Activated CD8-positive, alpha-beta T cell treated with anti-CD3 and anti-CD28 coated beads, Interleukin-2, amount 10 ng/mL, durations not matched to agents 7 days and 5 days (primary cell): ENCODE measurements at regions of chr21 and their contacts with region 1.

Region 1: DNA sequence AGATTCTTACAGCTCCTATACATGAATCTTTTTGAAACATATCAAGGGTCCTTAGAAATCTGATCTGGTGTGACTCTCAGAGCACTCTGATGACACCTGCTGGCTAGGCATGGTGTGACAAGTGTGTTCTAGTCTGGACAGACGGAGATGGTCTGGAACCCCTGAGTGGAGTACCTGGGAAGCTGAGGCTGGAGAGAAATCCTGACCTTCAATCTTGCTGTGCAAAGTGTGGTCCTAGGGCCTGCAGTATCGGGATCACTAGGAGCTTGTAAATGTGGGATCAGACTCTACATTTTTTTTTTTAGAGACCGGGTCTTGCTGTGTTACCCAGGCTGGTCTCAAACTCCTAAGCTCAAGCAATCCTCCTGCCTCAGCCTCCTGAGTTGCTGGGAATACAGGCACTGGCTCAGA is 78.6 kb upstream of the SOD1 start:
- DNase-seq: peak; percentile 83
- ATAC-seq: peak; percentile 82
- H3K4me3 Mint-ChIP-seq: no peak overlapping the region
- H3K27ac Mint-ChIP-seq: no peak overlapping the region
- H3K4me1 Mint-ChIP-seq: no peaks in the 10 kb centered on the region
- H3K27me3 Mint-ChIP-seq: peaks cover 3% of the 10 kb centered on the region

Region 2: GRCh38 chr21:31098576-31099005 is 482.3 kb before region 1 on chr21:
- CTCF ChIA-PET with region 1: interaction called, 38 read pairs
- POLR2A ChIA-PET with region 1: no interaction called
- DNase-seq: peak; percentile 78
- ATAC-seq: peak; percentile 82
- H3K4me3 Mint-ChIP-seq: no peak overlapping the region
- H3K27ac Mint-ChIP-seq: no peak overlapping the region
- H3K4me1 Mint-ChIP-seq: peaks cover 24% of the 10 kb centered on the region
- H3K27me3 Mint-ChIP-seq: peaks cover 8% of the 10 kb centered on the region

Region 3: DNA sequence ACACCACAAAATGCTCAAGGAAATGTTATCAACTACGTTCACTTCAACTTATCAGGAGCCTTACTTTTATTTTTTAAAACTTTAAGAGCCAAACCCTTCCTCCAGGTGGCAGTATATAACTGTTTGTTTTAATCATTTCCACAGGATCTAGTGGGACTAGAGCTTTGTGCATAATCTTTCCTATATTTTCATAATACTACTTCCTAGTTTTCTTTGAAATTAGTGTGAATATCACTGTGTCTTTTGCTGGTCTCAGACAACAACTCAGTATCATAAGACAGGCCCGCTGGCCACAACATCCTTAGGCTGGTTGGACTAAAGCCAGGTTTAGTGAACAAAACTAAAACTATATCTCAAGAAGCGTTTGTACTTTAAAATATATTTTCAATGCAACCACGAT is 382.3 kb before region 1 on chr21:
- CTCF ChIA-PET with region 1: interaction called, 92 read pairs
- POLR2A ChIA-PET with region 1: no interaction called
- DNase-seq: no peak
- ATAC-seq: peak; percentile 57
- H3K4me3 Mint-ChIP-seq: no peak overlapping the region
- H3K27ac Mint-ChIP-seq: no peak overlapping the region
- H3K4me1 Mint-ChIP-seq: peaks cover 23% of the 10 kb centered on the region
- H3K27me3 Mint-ChIP-seq: no peaks in the 10 kb centered on the region

Region 4: GRCh38 chr21:31343680-31344480 is 237.0 kb before region 1 on chr21 and contains the start of gene TIAM1:
- CTCF ChIA-PET with region 1: interaction called, 10 read pairs
- POLR2A ChIA-PET with region 1: no interaction called
- DNase-seq: no peak
- ATAC-seq: peak; percentile 75
- H3K4me3 Mint-ChIP-seq: peak within 1 kb of the TSS; percentile 92
- H3K27ac Mint-ChIP-seq: peak within 1 kb of the TSS; percentile 82
- H3K4me1 Mint-ChIP-seq: peaks cover 64% of the 10 kb centered on the region
- H3K27me3 Mint-ChIP-seq: peaks cover 24% of the 10 kb centered on the region
- total RNA-seq, gene TIAM1: 41.5 to 46.9 TPM

Region 5: GRCh38 chr21:31604591-31605190 is 23.8 kb after region 1 on chr21:
- CTCF ChIA-PET with region 1: interaction called, 11 read pairs
- POLR2A ChIA-PET with region 1: no interaction called
- DNase-seq: peak; percentile 81
- ATAC-seq: peak; percentile 87
- H3K4me3 Mint-ChIP-seq: no peak overlapping the region
- H3K27ac Mint-ChIP-seq: no peak overlapping the region
- H3K4me1 Mint-ChIP-seq: peaks cover 2% of the 10 kb centered on the region
- H3K27me3 Mint-ChIP-seq: peaks cover 3% of the 10 kb centered on the region